CD4-positive, alpha-beta memory T cell (primary cell): ENCODE measurements at regions of chr16 and their contacts with region 1.

Region 1: GRCh38 chr16:55021595-55022475 is 91.2 kb downstream of the IRX5 start:
- DNase-seq: no peak
- H3K4me3 ChIP-seq: no peak overlapping the region
- H3K4me3 Mint-ChIP-seq: no peak overlapping the region
- H3K27ac ChIP-seq: no peak overlapping the region
- H3K27ac Mint-ChIP-seq: no peak overlapping the region
- H3K4me1 ChIP-seq: no peaks in the 10 kb centered on the region
- H3K4me1 Mint-ChIP-seq: no peaks in the 10 kb centered on the region
- H3K27me3 ChIP-seq: no peaks in the 10 kb centered on the region
- H3K27me3 Mint-ChIP-seq: peaks cover 13 to 15% of the 10 kb centered on the region in 2 donors

Region 2: DNA sequence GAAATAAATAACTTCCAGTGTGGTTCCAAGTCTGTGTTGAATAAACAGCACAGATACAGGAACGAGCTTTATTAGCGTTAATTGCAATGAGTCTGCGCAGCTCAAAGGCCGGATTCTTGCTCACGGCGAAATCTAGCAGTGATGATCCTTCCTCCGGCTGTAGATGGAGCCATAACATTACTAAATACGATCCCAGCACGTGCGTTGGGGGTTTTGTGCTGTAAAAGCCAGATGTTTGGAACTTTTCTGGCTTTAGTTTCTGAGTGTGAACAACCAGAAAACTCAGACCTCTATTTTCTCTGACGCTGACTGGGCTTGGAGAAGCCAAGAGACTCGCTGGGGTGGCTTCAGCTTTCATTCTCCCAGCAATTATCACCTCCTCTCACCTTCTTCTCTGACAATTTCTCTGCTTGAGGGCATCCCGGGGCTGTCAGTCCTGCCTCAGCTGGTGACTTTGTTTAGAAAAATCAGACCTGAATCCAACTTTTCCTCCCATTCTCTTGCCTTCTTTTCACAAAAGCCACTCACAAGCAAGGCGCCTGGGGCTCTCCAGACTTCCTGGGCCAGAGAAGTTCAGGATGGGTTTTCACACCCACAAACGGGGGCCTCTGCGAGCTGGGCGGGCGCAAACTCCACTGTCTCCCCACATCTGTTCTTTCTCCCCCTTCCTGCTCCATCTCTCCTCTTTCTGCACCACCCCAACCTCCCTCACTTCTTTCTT is 1471.7 kb before region 1 on chr16:
- CTCF ChIA-PET with region 1: interaction called, 16 read pairs
- POLR2A ChIA-PET with region 1: no interaction called
- intact Hi-C with region 1: no loop called
- DNase-seq: peak; percentile 50 to 59 (median 57)
- H3K4me3 ChIP-seq: no peak overlapping the region
- H3K4me3 Mint-ChIP-seq: peak overlapping the region in 2 of 8 donors; percentile 4 to 25
- H3K27ac ChIP-seq: no peak overlapping the region
- H3K27ac Mint-ChIP-seq: peak overlapping the region in 1 of 7 donors; percentile 40
- H3K4me1 ChIP-seq: peaks cover 36% of the 10 kb centered on the region
- H3K4me1 Mint-ChIP-seq: peaks cover 15 to 39% (median 27%) of the 10 kb centered on the region in 4 donors
- H3K27me3 ChIP-seq: no peaks in the 10 kb centered on the region
- H3K27me3 Mint-ChIP-seq: peaks cover 0 to 2% of the 10 kb centered on the region in 2 donors

Region 3: GRCh38 chr16:54890381-54890780 is 131.5 kb before region 1 on chr16:
- CTCF ChIA-PET with region 1: no interaction called
- POLR2A ChIA-PET with region 1: no interaction called
- intact Hi-C with region 1: no loop called
- DNase-seq: no peak
- H3K4me3 ChIP-seq: no peak overlapping the region
- H3K4me3 Mint-ChIP-seq: no peak overlapping the region
- H3K27ac ChIP-seq: no peak overlapping the region
- H3K27ac Mint-ChIP-seq: no peak overlapping the region
- H3K4me1 ChIP-seq: no peaks in the 10 kb centered on the region
- H3K4me1 Mint-ChIP-seq: no peaks in the 10 kb centered on the region
- H3K27me3 ChIP-seq: no peaks in the 10 kb centered on the region
- H3K27me3 Mint-ChIP-seq: peaks cover 0 to 2% of the 10 kb centered on the region in 2 donors

Region 4: GRCh38 chr16:54921206-54921824 is 100.5 kb before region 1 on chr16:
- CTCF ChIA-PET with region 1: no interaction called
- POLR2A ChIA-PET with region 1: no interaction called
- intact Hi-C with region 1: no loop called
- DNase-seq: no peak
- H3K4me3 ChIP-seq: no peak overlapping the region
- H3K4me3 Mint-ChIP-seq: no peak overlapping the region
- H3K27ac ChIP-seq: no peak overlapping the region
- H3K27ac Mint-ChIP-seq: no peak overlapping the region
- H3K4me1 ChIP-seq: no peaks in the 10 kb centered on the region
- H3K4me1 Mint-ChIP-seq: no peaks in the 10 kb centered on the region
- H3K27me3 ChIP-seq: peaks cover 15% of the 10 kb centered on the region
- H3K27me3 Mint-ChIP-seq: peaks cover 10 to 29% of the 10 kb centered on the region in 2 donors